Tibial artery (tissue), 4 donors: ENCODE measurements at regions of chr14 and their contacts with region 1.

Region 1: DNA sequence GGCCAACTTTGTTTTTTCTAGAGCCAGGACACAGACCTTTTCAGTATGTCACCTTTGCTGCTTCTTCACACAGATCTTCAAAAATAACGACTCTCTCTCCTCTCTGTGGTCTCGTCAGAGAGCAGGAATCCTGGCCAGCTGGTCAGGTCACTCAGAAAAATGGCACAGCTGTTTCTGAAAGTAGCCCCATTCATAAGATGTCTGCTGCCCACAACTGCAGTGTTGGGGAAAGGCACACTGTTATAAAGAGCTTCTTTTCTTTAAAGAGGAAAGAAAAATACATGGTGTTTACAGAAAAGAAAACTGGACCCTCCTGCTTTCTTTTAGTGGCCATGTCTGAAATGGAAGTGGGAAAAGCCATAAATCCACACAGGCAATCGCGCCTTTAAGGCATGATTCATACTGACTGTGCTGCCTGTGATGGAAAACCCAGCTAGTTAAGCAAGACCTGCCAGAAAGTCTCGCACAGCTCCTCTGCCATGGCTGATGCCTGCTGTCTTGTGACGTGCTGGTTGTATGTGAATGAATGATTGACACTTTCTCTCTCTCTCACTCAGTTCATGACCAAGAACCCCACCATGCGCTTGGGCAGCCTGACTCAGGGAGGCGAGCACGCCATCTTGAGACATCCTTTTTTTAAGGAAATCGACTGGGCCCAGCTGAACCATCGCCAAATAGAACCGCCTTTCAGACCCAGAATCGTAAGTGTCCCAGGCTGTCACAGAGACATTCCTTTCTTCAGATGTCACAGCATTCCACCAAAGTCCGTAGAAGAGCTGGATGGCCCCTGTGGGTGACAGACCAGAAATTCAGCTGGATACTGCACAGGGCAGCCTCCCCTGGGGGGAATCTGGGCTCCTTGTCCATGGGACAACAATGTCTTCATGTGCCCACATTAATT is 147.9 kb upstream of the HIF1A start:
- DNase-seq: peak; percentile 61 to 85
- H3K4me3 ChIP-seq: peak overlapping the region in 1 of 2 donors; percentile 2
- H3K27ac ChIP-seq: peak overlapping the region; percentile 77 to 82
- H3K4me1 ChIP-seq: peaks cover 5 to 60% (median 52%) of the 10 kb centered on the region in 4 donors
- H3K27me3 ChIP-seq: no peaks in the 10 kb centered on the region
- CTCF ChIP-seq: no peak

Region 2: DNA sequence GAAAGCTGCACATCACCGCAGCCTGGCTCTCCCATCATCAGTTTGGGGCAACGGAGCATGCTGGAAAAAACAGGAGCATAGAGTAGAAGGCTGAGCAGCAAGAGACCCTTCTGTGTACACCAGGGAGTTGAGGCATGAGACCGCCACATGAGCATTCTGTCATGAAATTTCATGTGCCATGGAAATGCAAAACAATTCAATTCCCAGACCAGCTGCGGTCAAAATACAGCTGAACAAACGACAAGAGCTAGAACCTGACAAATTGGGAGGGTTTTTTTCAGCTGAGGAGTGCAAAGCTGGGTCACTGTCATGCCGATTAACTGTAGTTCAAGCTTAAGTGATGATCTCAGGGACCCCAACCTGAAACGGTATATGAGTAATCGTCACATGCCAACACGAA is 303.4 kb before region 1 on chr14:
- intact Hi-C with region 1: no loop called
- DNase-seq: no peak
- H3K4me3 ChIP-seq: no peak overlapping the region
- H3K27ac ChIP-seq: no peak overlapping the region
- H3K4me1 ChIP-seq: no peaks in the 10 kb centered on the region
- H3K27me3 ChIP-seq: no peaks in the 10 kb centered on the region
- CTCF ChIP-seq: no peak

Region 3: GRCh38 chr14:61475316-61475715 is 72.1 kb before region 1 on chr14:
- intact Hi-C with region 1: loop called (anchors 10 kb)
- DNase-seq: no peak
- H3K4me3 ChIP-seq: no peak overlapping the region
- H3K27ac ChIP-seq: peak overlapping the region; percentile 82 to 86
- H3K4me1 ChIP-seq: peaks cover 0 to 73% (median 56%) of the 10 kb centered on the region in 4 donors
- H3K27me3 ChIP-seq: no peaks in the 10 kb centered on the region
- CTCF ChIP-seq: peak; percentile 62 to 71

Region 4: DNA sequence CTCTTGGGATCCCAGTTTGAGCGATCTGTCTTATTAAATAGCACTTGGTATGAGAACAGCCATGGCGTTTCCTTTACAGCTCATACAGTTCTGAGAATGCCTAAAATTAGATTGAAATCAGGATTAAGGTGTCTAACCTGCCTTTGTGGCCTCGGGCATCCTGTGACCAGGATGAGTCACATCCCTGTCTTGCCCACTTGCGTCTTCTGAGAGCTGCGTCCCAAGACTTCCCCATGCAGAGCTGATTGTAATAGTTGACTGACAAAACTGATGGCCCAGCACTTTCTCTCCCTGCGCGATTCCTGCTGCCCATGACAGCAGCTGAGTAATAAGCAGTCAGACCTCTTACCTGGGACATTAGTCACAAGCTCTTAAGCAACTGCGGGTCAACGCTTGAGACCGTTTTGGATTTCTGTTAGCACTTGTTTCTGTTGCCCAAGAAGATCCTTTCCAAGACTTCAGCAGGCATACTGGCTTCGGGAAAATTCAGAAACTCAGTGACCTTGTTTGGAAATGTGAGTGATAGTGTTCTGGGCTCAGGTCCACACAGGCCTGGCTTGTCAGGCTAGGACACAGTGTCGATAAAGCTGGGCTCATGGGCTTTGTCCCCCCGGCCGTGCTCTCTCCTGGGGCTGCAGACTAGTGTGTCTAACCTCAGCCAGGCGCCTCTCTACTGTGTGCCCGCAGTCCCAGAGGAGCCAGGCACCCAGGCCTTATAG is 22.0 kb before region 1 on chr14:
- intact Hi-C with region 1: loop called (anchors 2 kb)
- DNase-seq: peak; percentile 86 to 92
- H3K4me3 ChIP-seq: no peak overlapping the region
- H3K27ac ChIP-seq: peak overlapping the region; percentile 80 to 86
- H3K4me1 ChIP-seq: peaks cover 9 to 53% (median 37%) of the 10 kb centered on the region in 4 donors
- H3K27me3 ChIP-seq: no peaks in the 10 kb centered on the region
- CTCF ChIP-seq: no peak